Endothelial cell of umbilical vein (primary cell): ENCODE measurements at regions of chr9 and their contacts with region 1.

Region 1: GRCh38 chr9:111597817-111598729 is 1.4 kb downstream of the PTGR1 start:
- DNase-seq: peak; percentile 81
- H3K4me3 ChIP-seq: peak overlapping the region; percentile 72 to 91 (median 90)
- H3K27ac ChIP-seq: peak overlapping the region; percentile 87
- H3K4me1 ChIP-seq: peaks cover 36% of the 10 kb centered on the region
- H3K27me3 ChIP-seq: no peaks in the 10 kb centered on the region
- CTCF ChIP-seq: peak; percentile 68 to 72
- POLR2A ChIP-seq: no peak

Region 2: DNA sequence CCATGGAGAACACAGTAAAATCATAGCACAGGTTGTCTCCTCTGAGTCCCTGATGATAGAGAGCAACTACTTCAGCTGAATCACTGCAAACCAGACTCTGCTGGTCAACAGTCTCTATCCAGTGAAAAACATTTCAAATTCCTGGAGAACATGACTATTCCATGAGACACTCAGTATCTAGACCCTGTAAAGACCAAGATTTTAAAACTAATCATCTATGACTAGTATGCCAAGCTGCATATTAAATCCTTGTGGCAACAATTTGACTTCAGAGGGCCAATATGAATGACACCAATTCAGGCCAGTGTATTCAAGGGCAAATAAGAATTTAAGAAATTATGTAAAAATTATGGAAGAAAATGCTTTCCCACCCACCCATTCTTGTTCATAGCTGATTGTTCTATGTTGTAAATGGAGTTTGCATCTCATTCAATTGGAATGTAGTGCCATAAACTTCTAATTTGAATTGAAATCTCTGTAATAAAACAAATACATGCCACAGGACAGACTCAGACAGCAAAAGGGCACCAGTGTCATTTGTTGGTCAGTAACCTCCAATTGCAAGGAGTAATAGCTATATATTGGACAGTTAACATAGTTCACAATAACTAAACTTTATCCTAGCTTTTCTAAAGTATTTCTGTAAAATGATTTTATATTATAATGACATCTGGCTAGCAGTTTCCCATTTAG is 479.7 kb before region 1 on chr9:
- CTCF ChIA-PET with region 1: no interaction called
- POLR2A ChIA-PET with region 1: no interaction called
- dilution Hi-C with region 1: no loop called
- intact Hi-C with region 1: no loop called
- DNase-seq: no peak
- H3K4me3 ChIP-seq: no peak overlapping the region
- H3K27ac ChIP-seq: no peak overlapping the region
- H3K4me1 ChIP-seq: no peaks in the 10 kb centered on the region
- H3K27me3 ChIP-seq: no peaks in the 10 kb centered on the region
- CTCF ChIP-seq: no peak
- POLR2A ChIP-seq: no peak

Region 3: GRCh38 chr9:111621895-111622480 is 23.9 kb after region 1 on chr9:
- CTCF ChIA-PET with region 1: interaction called, 221 read pairs
- POLR2A ChIA-PET with region 1: interaction called, 6 read pairs
- dilution Hi-C with region 1: no loop called
- intact Hi-C with region 1: loop called (anchors 1 kb)
- DNase-seq: peak; percentile 68
- H3K4me3 ChIP-seq: no peak overlapping the region
- H3K27ac ChIP-seq: no peak overlapping the region
- H3K4me1 ChIP-seq: peaks cover 4% of the 10 kb centered on the region
- H3K27me3 ChIP-seq: no peaks in the 10 kb centered on the region
- CTCF ChIP-seq: peak; percentile 77 to 91
- POLR2A ChIP-seq: no peak

Region 4: GRCh38 chr9:111661150-111661801 is 63.2 kb after region 1 on chr9 and contains the start of gene GNG10:
- CTCF ChIA-PET with region 1: interaction called, 6 read pairs
- POLR2A ChIA-PET with region 1: no interaction called
- dilution Hi-C with region 1: no loop called
- intact Hi-C with region 1: loop called (anchors 2 kb)
- DNase-seq: peak; percentile 43
- H3K4me3 ChIP-seq: peak within 1 kb of the TSS; percentile 45 to 89 (median 75)
- H3K27ac ChIP-seq: no peak within 1 kb of the TSS
- H3K4me1 ChIP-seq: peaks cover 15% of the 10 kb centered on the region
- H3K27me3 ChIP-seq: no peaks in the 10 kb centered on the region
- CTCF ChIP-seq: no peak
- POLR2A ChIP-seq: peak; percentile 62
- total RNA-seq, gene GNG10: 32.9 and 33.0 TPM in 2 replicates

Region 5: DNA sequence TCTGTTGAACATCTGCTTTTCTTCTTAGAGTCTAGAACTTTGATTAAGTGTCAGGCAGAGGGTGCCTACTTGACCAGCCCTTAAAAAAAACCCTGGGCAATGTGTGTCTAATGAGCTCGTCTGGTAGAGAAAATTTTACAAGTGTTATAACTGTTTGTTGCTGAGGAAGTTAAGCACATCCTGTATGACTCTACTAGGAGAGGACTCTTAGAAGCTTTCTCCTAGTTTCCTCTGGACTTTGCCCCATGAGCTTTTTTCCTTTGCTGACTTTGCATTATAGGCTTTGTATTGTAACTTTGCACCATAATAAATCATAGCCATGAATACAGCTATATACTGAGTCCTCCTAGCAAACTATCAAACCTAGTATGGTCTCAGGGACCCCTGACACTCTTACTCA is 102.7 kb after region 1 on chr9:
- CTCF ChIA-PET with region 1: interaction called, 11 read pairs
- POLR2A ChIA-PET with region 1: interaction called, 6 read pairs
- dilution Hi-C with region 1: no loop called
- intact Hi-C with region 1: no loop called
- DNase-seq: peak; percentile 75
- H3K4me3 ChIP-seq: no peak overlapping the region
- H3K27ac ChIP-seq: peak overlapping the region; percentile 83
- H3K4me1 ChIP-seq: peaks cover 14% of the 10 kb centered on the region
- H3K27me3 ChIP-seq: no peaks in the 10 kb centered on the region
- CTCF ChIP-seq: no peak
- POLR2A ChIP-seq: no peak